B cell (primary cell): ENCODE measurements at regions of chr12 and their contacts with region 1.

Region 1: GRCh38 chr12:132489602-132490239 is at the start of gene FBRSL1:
- DNase-seq: peak; percentile 93
- ATAC-seq: peak; percentile 79
- H3K4me3 ChIP-seq: peak within 1 kb of the TSS; percentile 55 to 86 (median 78)
- H3K4me3 Mint-ChIP-seq: peak within 1 kb of the TSS; percentile 91
- H3K27ac ChIP-seq: peak within 1 kb of the TSS; percentile 75 to 95
- H3K27ac Mint-ChIP-seq: peak within 1 kb of the TSS; percentile 96
- H3K4me1 ChIP-seq: peaks cover 32 to 63% of the 10 kb centered on the region in 2 donors
- H3K4me1 Mint-ChIP-seq: peaks cover 63% of the 10 kb centered on the region
- H3K27me3 ChIP-seq: no peaks in the 10 kb centered on the region
- H3K27me3 Mint-ChIP-seq: no peaks in the 10 kb centered on the region
- CTCF ChIP-seq: no peak
- total RNA-seq, gene FBRSL1: 112 and 121 TPM in 2 replicates

Region 2: DNA sequence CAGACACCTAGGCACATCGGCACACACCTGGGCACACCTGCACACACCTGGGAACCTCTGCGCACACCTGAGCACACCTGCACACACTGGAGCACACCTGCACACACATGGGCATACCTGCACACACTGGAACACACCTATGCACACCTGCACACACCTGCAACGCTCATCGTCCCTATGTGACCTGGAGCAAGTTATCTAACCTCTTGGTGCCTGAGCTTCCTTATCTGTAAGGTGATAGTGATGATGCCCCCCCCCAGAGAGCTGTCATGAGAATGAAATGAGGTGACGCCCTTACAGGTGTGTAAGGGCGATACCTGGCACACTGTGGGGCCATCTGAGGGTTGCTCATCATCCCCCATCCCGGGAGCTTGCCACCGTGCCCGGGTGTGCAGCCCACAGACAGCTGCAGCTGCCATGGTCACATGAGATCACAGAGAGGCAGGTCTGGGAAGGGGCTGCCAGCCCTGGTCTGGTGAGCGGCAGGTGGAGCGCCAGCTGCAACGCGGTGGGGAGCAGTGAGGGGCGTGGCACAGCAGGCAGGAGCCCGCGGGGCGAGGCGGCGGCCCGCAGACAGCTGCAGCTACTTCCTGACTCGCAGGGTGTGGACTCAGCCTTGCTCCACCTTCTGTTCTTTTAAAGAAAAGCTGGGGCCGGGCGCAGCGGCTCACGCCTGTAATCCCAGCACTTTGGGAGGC is 59.6 kb before region 1 on chr12:
- CTCF ChIA-PET with region 1: interaction called, 4 read pairs
- POLR2A ChIA-PET with region 1: interaction called, 7 read pairs
- intact Hi-C with region 1: loop called (anchors 1 kb)
- DNase-seq: peak; percentile 90
- ATAC-seq: peak; percentile 88
- H3K4me3 ChIP-seq: peak overlapping the region in 3 of 5 experiments; percentile 14 to 41 (median 18)
- H3K4me3 Mint-ChIP-seq: peak overlapping the region; percentile 78
- H3K27ac ChIP-seq: peak overlapping the region; percentile 35 to 37
- H3K27ac Mint-ChIP-seq: peak overlapping the region; percentile 82
- H3K4me1 ChIP-seq: peaks cover 60 to 70% of the 10 kb centered on the region in 2 donors
- H3K4me1 Mint-ChIP-seq: peaks cover 63% of the 10 kb centered on the region
- H3K27me3 ChIP-seq: no peaks in the 10 kb centered on the region
- H3K27me3 Mint-ChIP-seq: no peaks in the 10 kb centered on the region
- CTCF ChIP-seq: no peak

Region 3: GRCh38 chr12:132445884-132446632 is 43.7 kb before region 1 on chr12:
- CTCF ChIA-PET with region 1: no interaction called
- POLR2A ChIA-PET with region 1: interaction called, 4 read pairs
- intact Hi-C with region 1: loop called (anchors 5 kb)
- DNase-seq: peak; percentile 81
- ATAC-seq: peak; percentile 6
- H3K4me3 ChIP-seq: peak overlapping the region; percentile 2 to 46 (median 42)
- H3K4me3 Mint-ChIP-seq: peak overlapping the region; percentile 83
- H3K27ac ChIP-seq: peak overlapping the region; percentile 96
- H3K27ac Mint-ChIP-seq: peak overlapping the region; percentile 99
- H3K4me1 ChIP-seq: peaks cover 59 to 87% of the 10 kb centered on the region in 2 donors
- H3K4me1 Mint-ChIP-seq: peaks cover 54% of the 10 kb centered on the region
- H3K27me3 ChIP-seq: no peaks in the 10 kb centered on the region
- H3K27me3 Mint-ChIP-seq: no peaks in the 10 kb centered on the region
- CTCF ChIP-seq: no peak

Region 4: GRCh38 chr12:132470978-132471857 is 18.5 kb before region 1 on chr12:
- CTCF ChIA-PET with region 1: no interaction called
- POLR2A ChIA-PET with region 1: interaction called, 6 read pairs
- intact Hi-C with region 1: loop called (anchors 1 kb)
- DNase-seq: peak; percentile 87
- ATAC-seq: peak; percentile 70
- H3K4me3 ChIP-seq: peak overlapping the region in 2 of 5 experiments; percentile 42 to 55
- H3K4me3 Mint-ChIP-seq: peak overlapping the region; percentile 64
- H3K27ac ChIP-seq: peak overlapping the region; percentile 75 to 83
- H3K27ac Mint-ChIP-seq: peak overlapping the region; percentile 92
- H3K4me1 ChIP-seq: peaks cover 59 to 76% of the 10 kb centered on the region in 2 donors
- H3K4me1 Mint-ChIP-seq: peaks cover 55% of the 10 kb centered on the region
- H3K27me3 ChIP-seq: no peaks in the 10 kb centered on the region
- H3K27me3 Mint-ChIP-seq: no peaks in the 10 kb centered on the region
- CTCF ChIP-seq: no peak

Region 5: DNA sequence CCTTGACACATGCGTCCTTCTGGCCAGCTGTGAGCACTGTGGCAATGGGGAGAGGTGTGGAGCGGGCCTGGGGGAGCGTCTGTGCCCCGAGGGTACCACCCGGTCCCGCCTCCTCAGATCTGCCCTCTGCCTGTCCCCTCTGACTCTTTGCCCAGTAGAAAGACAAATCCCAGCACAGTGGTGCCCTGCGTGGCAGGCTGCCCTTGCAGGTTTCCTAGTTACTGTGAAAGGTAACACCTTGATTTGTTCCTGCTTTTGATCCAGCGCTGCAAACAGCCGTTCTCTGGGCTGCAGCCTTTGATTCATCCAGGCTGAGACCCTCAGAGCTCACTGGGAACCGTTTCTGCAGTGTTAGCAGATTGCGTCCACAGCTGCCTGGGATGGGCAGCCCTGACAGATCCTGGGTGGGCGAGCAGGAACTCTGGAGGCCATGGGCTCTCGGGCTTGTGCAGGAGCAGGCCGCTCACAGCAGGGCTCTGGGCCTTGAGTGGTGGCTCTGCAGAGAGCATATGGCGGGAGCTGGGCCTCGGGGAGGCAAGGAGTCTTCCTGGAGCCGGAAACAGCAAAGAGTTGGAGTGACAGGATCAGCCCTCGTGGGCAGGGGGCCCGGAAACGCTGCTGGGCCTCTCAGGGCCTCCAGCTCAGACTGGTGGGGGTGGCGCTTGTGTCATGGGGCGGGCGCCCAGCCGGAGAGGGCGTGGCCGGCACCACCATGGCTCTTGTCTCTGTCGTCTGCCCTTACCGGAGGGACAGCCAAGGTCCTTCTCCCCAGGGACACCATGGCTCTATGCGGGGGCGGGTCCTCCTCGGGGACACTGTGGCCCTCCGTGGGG is 16.8 kb after region 1 on chr12:
- CTCF ChIA-PET with region 1: no interaction called
- POLR2A ChIA-PET with region 1: no interaction called
- intact Hi-C with region 1: loop called (anchors 2 kb)
- DNase-seq: peak; percentile 57
- ATAC-seq: peak; percentile 70
- H3K4me3 ChIP-seq: peak overlapping the region in 1 of 5 experiments; percentile 19
- H3K4me3 Mint-ChIP-seq: peak overlapping the region; percentile 57
- H3K27ac ChIP-seq: peak overlapping the region; percentile 18 to 37
- H3K27ac Mint-ChIP-seq: peak overlapping the region; percentile 59
- H3K4me1 ChIP-seq: peaks cover 43 to 53% of the 10 kb centered on the region in 2 donors
- H3K4me1 Mint-ChIP-seq: peaks cover 47% of the 10 kb centered on the region
- H3K27me3 ChIP-seq: peaks cover 0 to 14% (median 0%) of the 10 kb centered on the region in 4 experiments
- H3K27me3 Mint-ChIP-seq: no peaks in the 10 kb centered on the region
- CTCF ChIP-seq: no peak